Endothelial cell of umbilical vein (primary cell): ENCODE measurements at regions of chr7 and their contacts with region 1.

Region 1: GRCh38 chr7:1175967-1176851 is 16.2 kb upstream of the ZFAND2A start:
- DNase-seq: peak; percentile 80
- H3K4me3 ChIP-seq: peak overlapping the region in 2 of 3 experiments; percentile 17 to 22
- H3K27ac ChIP-seq: peak overlapping the region; percentile 20
- H3K4me1 ChIP-seq: peaks cover 14% of the 10 kb centered on the region
- H3K27me3 ChIP-seq: no peaks in the 10 kb centered on the region
- CTCF ChIP-seq: peak; percentile 97 to 98
- POLR2A ChIP-seq: no peak

Region 2: GRCh38 chr7:909358-910329 is 266.6 kb before region 1 on chr7:
- CTCF ChIA-PET with region 1: interaction called, 9 read pairs
- POLR2A ChIA-PET with region 1: no interaction called
- dilution Hi-C with region 1: no loop called
- intact Hi-C with region 1: loop called (anchors 2 kb)
- DNase-seq: no peak
- H3K4me3 ChIP-seq: no peak overlapping the region
- H3K27ac ChIP-seq: no peak overlapping the region
- H3K4me1 ChIP-seq: no peaks in the 10 kb centered on the region
- H3K27me3 ChIP-seq: peaks cover 6 to 9% of the 10 kb centered on the region in 2 experiments
- CTCF ChIP-seq: no peak
- POLR2A ChIP-seq: no peak

Region 3: DNA sequence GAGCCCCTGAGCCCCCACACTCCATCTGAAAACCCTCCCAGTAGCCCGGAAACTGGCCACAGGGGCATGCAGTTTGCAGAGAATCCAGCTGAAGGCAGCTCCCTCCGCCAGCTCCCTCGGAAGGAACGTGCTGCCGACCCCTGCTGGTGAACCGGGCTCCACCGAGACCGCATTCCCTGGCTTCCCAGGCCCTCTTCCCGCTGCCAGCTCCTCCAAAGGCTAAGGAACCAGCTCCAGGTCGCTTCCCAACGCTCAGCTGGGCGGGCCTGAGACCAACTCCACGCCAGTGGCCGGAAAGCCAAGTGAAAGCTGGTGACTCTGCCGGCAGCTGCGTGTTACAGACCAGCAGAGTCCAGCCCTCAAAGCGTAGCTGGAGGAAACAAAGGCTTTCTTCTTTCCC is 52.5 kb before region 1 on chr7:
- CTCF ChIA-PET with region 1: interaction called, 25 read pairs
- POLR2A ChIA-PET with region 1: no interaction called
- dilution Hi-C with region 1: no loop called
- intact Hi-C with region 1: no loop called
- DNase-seq: peak; percentile 94
- H3K4me3 ChIP-seq: no peak overlapping the region
- H3K27ac ChIP-seq: peak overlapping the region; percentile 75
- H3K4me1 ChIP-seq: peaks cover 12% of the 10 kb centered on the region
- H3K27me3 ChIP-seq: no peaks in the 10 kb centered on the region
- CTCF ChIP-seq: peak; percentile 78 to 93
- POLR2A ChIP-seq: peak; percentile 38

Region 4: GRCh38 chr7:1137510-1138167 is 38.6 kb before region 1 on chr7:
- CTCF ChIA-PET with region 1: interaction called, 10 read pairs
- POLR2A ChIA-PET with region 1: no interaction called
- dilution Hi-C with region 1: no loop called
- intact Hi-C with region 1: no loop called
- DNase-seq: no peak
- H3K4me3 ChIP-seq: peak overlapping the region; percentile 72 to 97 (median 80)
- H3K27ac ChIP-seq: peak overlapping the region; percentile 33
- H3K4me1 ChIP-seq: peaks cover 10% of the 10 kb centered on the region
- H3K27me3 ChIP-seq: no peaks in the 10 kb centered on the region
- CTCF ChIP-seq: no peak
- POLR2A ChIP-seq: peak; percentile 64

Region 5: DNA sequence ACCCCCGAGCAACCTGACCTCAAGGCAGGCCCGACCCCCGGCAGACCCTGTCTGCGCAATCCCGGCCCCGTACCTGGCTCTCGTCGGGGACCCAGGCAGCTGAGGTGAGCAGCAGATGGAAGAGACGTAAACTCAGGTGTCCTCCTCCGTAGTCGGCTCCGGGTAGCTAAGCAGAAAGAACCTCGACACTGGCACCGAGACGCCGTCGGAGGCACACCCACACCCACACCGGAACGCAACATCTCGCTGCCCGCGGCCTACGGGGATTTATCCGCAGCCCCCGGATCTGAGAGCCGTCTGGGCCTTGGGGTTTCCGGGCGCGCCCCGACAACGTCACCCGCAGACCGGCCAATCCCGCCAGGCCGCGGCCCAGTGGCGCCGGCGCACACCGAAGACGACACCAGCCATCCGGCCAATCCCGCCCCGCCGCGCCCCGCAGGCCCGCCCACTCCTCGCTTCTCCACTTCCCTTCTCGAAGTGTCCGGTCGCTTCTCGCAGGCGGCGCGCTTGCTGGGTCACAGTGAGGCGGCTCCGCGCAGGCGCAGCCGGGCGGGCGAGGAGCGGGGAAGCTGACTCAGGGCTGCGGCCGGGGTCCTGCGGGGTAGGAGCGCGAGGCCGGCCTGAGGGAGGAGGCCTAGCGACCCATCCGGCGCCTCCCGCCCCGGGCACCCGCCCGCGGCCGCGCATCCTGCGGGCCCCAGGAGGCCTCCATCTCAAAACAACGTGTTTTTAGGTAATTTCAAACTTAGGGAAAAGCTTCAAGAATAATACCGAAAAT is 16.1 kb before region 1 on chr7 and contains the start of gene ZFAND2A:
- CTCF ChIA-PET with region 1: interaction called, 25 read pairs
- POLR2A ChIA-PET with region 1: interaction called, 3 read pairs
- dilution Hi-C with region 1: no loop called
- intact Hi-C with region 1: loop called (anchors 2 kb)
- DNase-seq: peak; percentile 99
- H3K4me3 ChIP-seq: peak within 1 kb of the TSS; percentile 71 to 97 (median 77)
- H3K27ac ChIP-seq: peak within 1 kb of the TSS; percentile 79
- H3K4me1 ChIP-seq: peaks cover 30% of the 10 kb centered on the region
- H3K27me3 ChIP-seq: no peaks in the 10 kb centered on the region
- CTCF ChIP-seq: no peak
- POLR2A ChIP-seq: peak; percentile 90
- total RNA-seq, gene ZFAND2A: 20.6 and 31.8 TPM in 2 replicates